ENCODE measurements at regions of chr1 and their contacts with region 1.

Region 1: GRCh38 chr1:164999146-164999545 is 357.4 kb downstream of the LMX1A start:
- DNase-seq: peak; percentile 5
- ATAC-seq: no peak
- H3K4me3 ChIP-seq: no peak overlapping the region
- H3K27ac ChIP-seq: no peak overlapping the region
- H3K4me1 ChIP-seq: no peaks in the 10 kb centered on the region
- H3K27me3 ChIP-seq: peaks cover 34% of the 10 kb centered on the region
- CTCF ChIP-seq: no peak

Region 2: GRCh38 chr1:164433141-164433817 is 565.9 kb before region 1 on chr1:
- CTCF ChIA-PET with region 1: no interaction called
- POLR2A ChIA-PET with region 1: no interaction called
- intact Hi-C with region 1: no loop called
- DNase-seq: no peak
- ATAC-seq: no peak
- H3K4me3 ChIP-seq: no peak overlapping the region
- H3K27ac ChIP-seq: no peak overlapping the region
- H3K4me1 ChIP-seq: no peaks in the 10 kb centered on the region
- H3K27me3 ChIP-seq: peaks cover 22% of the 10 kb centered on the region
- CTCF ChIP-seq: no peak

Region 3: GRCh38 chr1:164930241-164930640 is 68.9 kb before region 1 on chr1:
- CTCF ChIA-PET with region 1: no interaction called
- POLR2A ChIA-PET with region 1: no interaction called
- intact Hi-C with region 1: loop called (anchors 10 kb)
- DNase-seq: no peak
- ATAC-seq: no peak
- H3K4me3 ChIP-seq: no peak overlapping the region
- H3K27ac ChIP-seq: no peak overlapping the region
- H3K4me1 ChIP-seq: no peaks in the 10 kb centered on the region
- H3K27me3 ChIP-seq: peaks cover 85% of the 10 kb centered on the region
- CTCF ChIP-seq: peak; percentile 34; the same call in 1 of the 2 replicates